ENCODE measurements at regions of chr3 and their contacts with region 1.

Region 1: GRCh38 chr3:71955240-71956068 is 170.5 kb upstream of the PROK2 start:
- DNase-seq: peak; percentile 60 to 97 (median 84)

Region 2: GRCh38 chr3:71710906-71711494 is 244.5 kb before region 1 on chr3:
- intact Hi-C with region 1: loop called (anchors 5 kb)
- DNase-seq: no peak

Region 3: GRCh38 chr3:71744738-71745137 is 210.7 kb before region 1 on chr3:
- intact Hi-C with region 1: no loop called
- DNase-seq: no peak

Region 4: GRCh38 chr3:71875461-71875947 is 80.0 kb before region 1 on chr3:
- intact Hi-C with region 1: loop called (anchors 5 kb)
- DNase-seq: peak; percentile 72 to 97 (median 84)

Region 5: DNA sequence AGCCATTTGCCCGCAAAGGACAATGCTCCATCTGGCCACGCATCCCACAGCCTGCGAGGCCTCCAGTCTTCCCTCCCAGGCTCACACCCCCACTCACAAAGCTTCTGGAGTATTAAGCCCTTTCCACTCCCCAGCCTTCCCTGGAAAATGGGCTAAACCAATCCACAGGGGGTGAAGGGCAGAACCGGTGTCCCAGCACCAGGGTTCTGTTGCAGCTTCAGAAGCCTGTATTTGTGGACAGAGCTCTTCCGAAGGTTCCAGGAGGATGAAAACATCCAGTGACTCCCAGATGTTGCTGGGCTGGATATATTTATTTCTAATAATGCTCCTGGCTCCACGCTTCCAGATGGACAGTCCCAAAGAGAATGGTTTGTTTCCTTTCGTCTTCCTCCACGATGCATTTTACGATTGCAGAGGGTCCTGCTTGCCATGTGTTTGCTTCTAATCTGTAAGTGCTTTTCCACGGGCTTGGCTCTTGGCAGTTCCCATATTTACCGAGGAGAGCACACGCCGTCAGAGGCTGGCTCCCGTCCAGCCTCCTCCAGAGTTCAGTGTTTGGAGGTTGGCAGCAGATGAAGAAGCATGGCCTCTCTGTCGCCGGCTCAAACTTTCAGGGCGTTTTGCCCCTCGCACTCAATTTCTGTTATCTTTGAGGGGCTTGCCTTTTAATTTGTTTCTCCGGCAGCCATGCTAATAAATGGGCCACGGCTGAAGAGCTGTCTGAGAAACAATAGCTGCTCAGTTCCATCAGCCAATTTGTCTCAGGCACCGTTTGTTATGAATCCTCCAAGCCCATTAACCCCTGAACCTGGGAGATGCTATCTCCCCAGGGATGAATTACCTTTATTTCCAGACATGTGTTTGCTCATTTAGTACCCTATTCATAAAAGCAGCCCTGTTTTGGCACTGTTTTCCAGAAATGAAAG is 197.4 kb after region 1 on chr3:
- intact Hi-C with region 1: loop called (anchors 10 kb)
- DNase-seq: peak; percentile 27 to 94 (median 56)

Region 6: DNA sequence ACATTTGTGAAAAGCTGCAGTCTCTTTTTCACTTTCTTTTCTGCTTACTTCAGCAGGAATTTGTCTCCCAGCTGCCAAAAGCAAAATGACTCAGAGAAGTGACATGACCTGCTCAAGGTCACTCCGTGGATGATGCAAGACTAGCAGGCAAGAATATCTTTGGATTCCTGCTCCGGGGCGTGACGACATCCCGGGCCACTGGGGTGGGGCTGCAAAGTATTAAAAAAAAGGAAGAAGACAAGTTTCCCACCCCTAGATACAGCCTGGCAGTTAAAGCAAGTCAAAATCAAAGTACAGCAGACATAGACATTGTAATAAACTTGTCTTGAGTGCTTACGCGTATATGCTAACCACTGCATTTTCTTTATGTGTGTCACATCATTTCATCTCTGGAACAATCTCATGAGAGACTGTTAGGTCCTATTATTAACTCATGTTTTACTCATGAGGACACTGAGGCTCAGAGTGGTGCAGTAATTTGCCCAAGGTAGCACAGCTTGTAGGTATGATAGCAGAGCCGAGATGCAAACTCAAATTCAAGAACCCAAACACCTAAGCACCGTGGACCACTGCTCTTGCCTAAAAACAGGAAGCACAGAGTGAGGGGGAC is 314.7 kb after region 1 on chr3:
- intact Hi-C with region 1: loop called (anchors 5 kb)
- DNase-seq: peak in 1 of 10 donors; percentile 65

Region 7: GRCh38 chr3:72447059-72447946 is 491.8 kb after region 1 on chr3:
- intact Hi-C with region 1: loop called (anchors 5 kb)
- DNase-seq: peak; percentile 83 to 99 (median 88)

Region 8: GRCh38 chr3:72818092-72818773 is 862.8 kb after region 1 on chr3:
- intact Hi-C with region 1: loop called (anchors 1 kb)
- DNase-seq: peak in 1 of 10 donors; percentile 19

Measured in posterior cingulate gyrus (tissue), 11 donors.